H1 (cell line): ENCODE measurements at regions of chr10 and their contacts with region 1.

Region 1: DNA sequence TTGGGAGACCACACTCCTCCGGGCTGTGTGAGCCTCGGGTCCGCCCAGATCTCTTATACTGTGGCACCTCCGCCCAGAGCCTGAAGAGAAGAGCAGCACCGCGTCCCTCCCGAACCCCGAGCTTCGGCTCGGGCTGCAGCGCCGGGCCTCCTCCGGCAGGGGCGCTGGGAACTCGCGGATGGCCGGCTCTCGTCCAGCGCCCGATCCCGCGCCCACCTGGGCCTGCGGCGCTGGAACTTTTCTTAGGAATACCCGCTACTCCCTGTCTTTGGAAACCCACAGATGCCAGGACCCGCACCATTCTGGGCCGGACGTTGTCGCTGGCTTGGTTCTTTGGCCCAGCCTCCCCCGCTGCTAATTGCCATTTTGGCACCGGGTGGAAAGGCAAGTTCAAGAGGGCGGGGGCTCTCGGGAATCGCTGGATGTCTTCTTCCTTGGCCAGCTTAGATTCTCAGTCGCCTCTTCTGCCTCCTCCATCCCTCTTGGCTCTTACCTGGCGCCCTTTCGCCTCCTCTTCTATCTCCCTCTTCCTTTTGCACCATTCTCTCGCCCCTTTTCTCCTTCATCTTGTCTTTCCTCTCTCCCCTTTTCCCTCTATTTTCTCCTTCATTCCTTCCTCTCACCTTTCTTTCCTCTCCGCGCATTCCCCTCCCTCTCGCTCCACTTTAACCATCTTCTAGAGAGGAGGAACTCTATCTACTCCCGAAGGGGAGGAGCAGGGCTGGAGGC is 2.1 kb upstream of the SORCS3 start:
- DNase-seq: peak in 1 of 2 experiments; percentile 86
- H3K4me3 ChIP-seq: peak overlapping the region; percentile 50 to 71 (median 60)
- H3K27ac ChIP-seq: no peak overlapping the region
- H3K4me1 ChIP-seq: peaks cover 0 to 18% (median 7%) of the 10 kb centered on the region in 4 experiments; a peak in 4 of 7 replicates
- H3K27me3 ChIP-seq: peaks cover 32 to 65% (median 61%) of the 10 kb centered on the region in 4 experiments
- CTCF ChIP-seq: peak; percentile 75 to 82 (median 78)
- EP300 ChIP-seq: no peak
- POLR2A ChIP-seq: no peak
- RAD21 ChIP-seq: peak; percentile 80 to 86

Region 2: GRCh38 chr10:104774234-104774633 is 135.2 kb after region 1 on chr10:
- CTCF ChIA-PET with region 1: interaction called, 13 read pairs
- POLR2A ChIA-PET with region 1: no interaction called
- DNase-seq: no peak
- H3K4me3 ChIP-seq: no peak overlapping the region
- H3K27ac ChIP-seq: no peak overlapping the region
- H3K4me1 ChIP-seq: peaks cover 0 to 3% (median under 1%) of the 10 kb centered on the region in 4 experiments; a peak in 2 of 7 replicates
- H3K27me3 ChIP-seq: no peaks in the 10 kb centered on the region
- CTCF ChIP-seq: no peak
- EP300 ChIP-seq: no peak
- POLR2A ChIP-seq: no peak
- RAD21 ChIP-seq: no peak